CD8-positive, alpha-beta T cell (primary cell): ENCODE measurements at regions of chr15 and their contacts with region 1.

Region 1: GRCh38 chr15:52227456-52227855 is 36.3 kb upstream of the GNB5 start:
- DNase-seq: peak; percentile 37 to 88 (median 67)
- ATAC-seq: peak; percentile 100
- H3K4me3 ChIP-seq: no peak overlapping the region
- H3K4me3 Mint-ChIP-seq: no peak overlapping the region
- H3K27ac ChIP-seq: no peak overlapping the region
- H3K27ac Mint-ChIP-seq: no peak overlapping the region
- H3K4me1 ChIP-seq: peaks cover 4% of the 10 kb centered on the region
- H3K4me1 Mint-ChIP-seq: peaks cover 20% of the 10 kb centered on the region
- H3K27me3 ChIP-seq: no peaks in the 10 kb centered on the region
- H3K27me3 Mint-ChIP-seq: no peaks in the 10 kb centered on the region
- CTCF ChIP-seq: peak; percentile 72

Region 2: DNA sequence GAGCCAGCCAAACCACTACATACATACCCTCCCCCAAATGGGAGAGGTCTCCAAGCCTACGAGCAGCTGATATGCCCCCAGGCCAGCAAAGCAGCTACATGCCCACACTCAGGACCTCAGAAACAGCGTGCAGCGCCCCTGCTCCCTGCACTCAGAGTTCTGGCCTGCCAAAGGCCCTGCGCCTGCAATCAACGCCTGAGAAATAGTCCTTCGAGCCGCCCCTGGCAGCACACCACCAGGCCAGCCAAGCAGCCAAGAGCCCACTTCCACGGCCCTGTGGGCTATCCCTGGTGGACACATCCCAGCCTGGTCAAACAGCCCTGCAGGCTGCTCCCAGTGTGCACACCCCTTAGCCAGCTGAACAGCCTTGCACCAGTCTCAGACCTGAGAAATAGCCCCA is 743.9 kb before region 1 on chr15:
- CTCF ChIA-PET with region 1: no interaction called
- POLR2A ChIA-PET with region 1: no interaction called
- intact Hi-C with region 1: no loop called
- DNase-seq: no peak
- ATAC-seq: no peak
- H3K4me3 ChIP-seq: no peak overlapping the region
- H3K4me3 Mint-ChIP-seq: no peak overlapping the region
- H3K27ac ChIP-seq: no peak overlapping the region
- H3K27ac Mint-ChIP-seq: no peak overlapping the region
- H3K4me1 ChIP-seq: no peaks in the 10 kb centered on the region
- H3K4me1 Mint-ChIP-seq: no peaks in the 10 kb centered on the region
- H3K27me3 ChIP-seq: no peaks in the 10 kb centered on the region
- H3K27me3 Mint-ChIP-seq: no peaks in the 10 kb centered on the region
- CTCF ChIP-seq: no peak

Region 3: DNA sequence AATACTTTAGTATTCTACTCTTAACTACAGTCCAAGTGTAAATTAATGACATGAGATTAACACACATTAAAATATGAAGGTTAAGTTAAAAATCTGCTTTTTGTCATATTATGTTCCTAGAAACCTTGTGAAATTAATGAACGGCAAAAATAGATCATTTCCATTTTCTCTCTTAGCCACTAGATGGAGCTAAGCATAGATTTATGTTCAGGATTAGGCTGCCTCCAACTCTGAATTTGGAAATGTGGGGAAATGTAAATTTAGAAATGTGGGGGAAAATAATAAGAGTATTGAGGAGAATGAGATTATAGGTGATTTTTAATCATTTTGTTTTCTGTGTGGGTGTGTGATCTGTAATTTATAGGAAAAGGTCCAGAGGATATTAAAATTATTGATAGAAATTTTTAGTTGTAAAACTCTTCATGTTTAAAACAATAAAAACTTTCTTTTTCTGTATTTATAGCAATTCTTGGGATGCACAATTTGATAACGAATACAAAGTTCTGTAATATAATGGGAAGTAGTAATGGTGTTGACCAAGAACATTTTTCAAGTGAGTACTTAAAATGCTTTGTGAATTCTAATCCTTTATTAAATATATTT is 338.8 kb before region 1 on chr15:
- CTCF ChIA-PET with region 1: no interaction called
- POLR2A ChIA-PET with region 1: no interaction called
- intact Hi-C with region 1: loop called (anchors 2 to 10 kb)
- DNase-seq: peak in 2 of 9 experiments; percentile 20 to 41
- ATAC-seq: no peak
- H3K4me3 ChIP-seq: no peak overlapping the region
- H3K4me3 Mint-ChIP-seq: no peak overlapping the region
- H3K27ac ChIP-seq: no peak overlapping the region
- H3K27ac Mint-ChIP-seq: peak overlapping the region; percentile 21
- H3K4me1 ChIP-seq: no peaks in the 10 kb centered on the region
- H3K4me1 Mint-ChIP-seq: peaks cover 10% of the 10 kb centered on the region
- H3K27me3 ChIP-seq: no peaks in the 10 kb centered on the region
- H3K27me3 Mint-ChIP-seq: no peaks in the 10 kb centered on the region
- CTCF ChIP-seq: peak; percentile 96

Region 4: GRCh38 chr15:52139599-52140491 is 87.6 kb before region 1 on chr15:
- CTCF ChIA-PET with region 1: interaction called, 7 read pairs
- POLR2A ChIA-PET with region 1: no interaction called
- intact Hi-C with region 1: loop called in 1 of 2 experiments (anchors 1 kb)
- DNase-seq: peak; percentile 25 to 72 (median 63)
- ATAC-seq: peak; percentile 58
- H3K4me3 ChIP-seq: no peak overlapping the region
- H3K4me3 Mint-ChIP-seq: no peak overlapping the region
- H3K27ac ChIP-seq: no peak overlapping the region
- H3K27ac Mint-ChIP-seq: no peak overlapping the region
- H3K4me1 ChIP-seq: peaks cover 22% of the 10 kb centered on the region
- H3K4me1 Mint-ChIP-seq: peaks cover 21% of the 10 kb centered on the region
- H3K27me3 ChIP-seq: no peaks in the 10 kb centered on the region
- H3K27me3 Mint-ChIP-seq: no peaks in the 10 kb centered on the region
- CTCF ChIP-seq: peak; percentile 80

Region 5: DNA sequence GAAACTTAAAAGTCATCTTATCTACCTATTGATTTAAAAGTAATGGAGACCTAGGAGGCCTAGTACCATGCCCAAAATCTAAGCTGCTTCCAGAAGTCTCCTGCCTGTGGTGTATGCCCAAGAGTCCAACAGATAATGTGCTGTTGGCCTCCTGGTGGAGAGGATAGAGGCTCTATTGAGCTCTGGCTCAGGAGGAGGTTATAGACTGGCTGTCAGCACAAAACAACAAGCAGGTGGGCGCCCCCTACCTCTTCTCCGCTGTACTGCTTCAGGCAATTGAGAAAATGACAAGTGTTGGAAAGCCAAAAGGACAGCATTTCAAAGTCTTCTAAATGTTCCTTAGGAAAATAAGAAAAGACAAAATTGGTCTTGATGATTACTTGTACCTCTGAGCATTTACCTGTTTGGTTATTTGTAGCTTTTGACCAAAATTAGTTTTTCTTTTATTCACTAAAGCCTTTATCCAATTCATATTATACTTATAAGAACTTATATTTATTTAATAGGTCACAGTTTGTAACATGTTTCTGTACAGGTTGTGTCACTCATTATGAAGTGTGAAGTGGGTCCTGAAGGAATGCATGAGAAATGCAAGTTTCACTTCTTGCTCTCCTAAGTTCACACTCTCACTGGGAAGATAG is 19.0 kb before region 1 on chr15:
- CTCF ChIA-PET with region 1: interaction called, 43 read pairs
- POLR2A ChIA-PET with region 1: no interaction called
- intact Hi-C with region 1: no loop called
- DNase-seq: peak; percentile 52 to 81 (median 77)
- ATAC-seq: peak; percentile 100
- H3K4me3 ChIP-seq: no peak overlapping the region
- H3K4me3 Mint-ChIP-seq: no peak overlapping the region
- H3K27ac ChIP-seq: no peak overlapping the region
- H3K27ac Mint-ChIP-seq: no peak overlapping the region
- H3K4me1 ChIP-seq: no peaks in the 10 kb centered on the region
- H3K4me1 Mint-ChIP-seq: no peaks in the 10 kb centered on the region
- H3K27me3 ChIP-seq: no peaks in the 10 kb centered on the region
- H3K27me3 Mint-ChIP-seq: no peaks in the 10 kb centered on the region
- CTCF ChIP-seq: peak; percentile 88

Region 6: GRCh38 chr15:52241489-52241888 is 14.0 kb after region 1 on chr15:
- CTCF ChIA-PET with region 1: interaction called, 17 read pairs
- POLR2A ChIA-PET with region 1: no interaction called
- intact Hi-C with region 1: no loop called
- DNase-seq: peak in 1 of 9 experiments; percentile 49
- ATAC-seq: peak; percentile 71
- H3K4me3 ChIP-seq: no peak overlapping the region
- H3K4me3 Mint-ChIP-seq: peak overlapping the region; percentile 16
- H3K27ac ChIP-seq: no peak overlapping the region
- H3K27ac Mint-ChIP-seq: peak overlapping the region; percentile 53
- H3K4me1 ChIP-seq: peaks cover 12% of the 10 kb centered on the region
- H3K4me1 Mint-ChIP-seq: peaks cover 16% of the 10 kb centered on the region
- H3K27me3 ChIP-seq: no peaks in the 10 kb centered on the region
- H3K27me3 Mint-ChIP-seq: no peaks in the 10 kb centered on the region
- CTCF ChIP-seq: no peak